ENCODE measurements at regions of chr2 and their contacts with region 1.

Region 1: DNA sequence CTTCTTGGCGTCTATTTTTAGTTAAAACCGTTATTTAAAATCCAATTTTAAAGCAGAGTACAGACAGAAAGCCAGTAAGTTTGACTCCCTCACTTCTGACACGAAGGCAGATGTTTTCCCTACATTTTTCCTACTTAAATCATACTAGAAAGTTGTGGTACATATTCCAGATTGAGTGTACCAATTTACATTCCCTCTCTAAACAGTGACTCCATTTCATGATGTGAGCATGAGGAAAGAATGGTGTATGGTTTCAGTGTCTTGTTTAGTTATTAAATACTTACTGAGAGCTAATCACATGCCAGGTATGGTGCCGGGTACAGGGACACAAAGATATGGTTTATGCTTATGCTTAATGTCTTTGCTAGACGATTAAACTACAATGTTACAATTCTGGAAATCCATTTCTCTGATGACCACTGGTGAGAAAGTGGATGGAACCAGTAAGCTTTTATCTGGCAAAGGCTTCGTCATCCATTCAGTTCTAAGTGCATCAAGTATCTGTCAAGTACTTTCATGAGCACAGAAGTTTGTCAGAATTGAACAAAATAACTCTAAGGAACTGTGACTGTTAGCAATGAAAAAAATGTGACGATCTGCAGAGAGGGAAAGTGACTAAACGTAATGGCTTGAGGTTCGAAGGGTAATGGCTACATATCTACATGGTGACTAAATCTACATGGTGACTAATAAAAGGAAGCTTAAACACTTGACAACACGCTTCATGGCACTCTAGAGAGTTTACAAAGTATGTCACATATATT is 25.7 kb downstream of the MAP4K3 start:
- DNase-seq: no peak
- H3K4me3 ChIP-seq: no peak overlapping the region
- H3K27ac ChIP-seq: no peak overlapping the region
- H3K4me1 ChIP-seq: peaks cover 0 to 24% (median 13%) of the 10 kb centered on the region in 4 experiments
- H3K27me3 ChIP-seq: no peaks in the 10 kb centered on the region

Region 2: GRCh38 chr2:39399570-39399969 is 11.8 kb before region 1 on chr2:
- CTCF ChIA-PET with region 1: interaction called, 14 read pairs
- POLR2A ChIA-PET with region 1: interaction called, 3 read pairs
- DNase-seq: no peak
- H3K4me3 ChIP-seq: no peak overlapping the region
- H3K27ac ChIP-seq: no peak overlapping the region
- H3K4me1 ChIP-seq: peaks cover 0 to 9% (median 3%) of the 10 kb centered on the region in 4 experiments
- H3K27me3 ChIP-seq: no peaks in the 10 kb centered on the region

Measured in common myeloid progenitor, CD34-positive (primary cell).